PC-9 (cell line): ENCODE measurements at regions of chr15 and their contacts with region 1.

Region 1: DNA sequence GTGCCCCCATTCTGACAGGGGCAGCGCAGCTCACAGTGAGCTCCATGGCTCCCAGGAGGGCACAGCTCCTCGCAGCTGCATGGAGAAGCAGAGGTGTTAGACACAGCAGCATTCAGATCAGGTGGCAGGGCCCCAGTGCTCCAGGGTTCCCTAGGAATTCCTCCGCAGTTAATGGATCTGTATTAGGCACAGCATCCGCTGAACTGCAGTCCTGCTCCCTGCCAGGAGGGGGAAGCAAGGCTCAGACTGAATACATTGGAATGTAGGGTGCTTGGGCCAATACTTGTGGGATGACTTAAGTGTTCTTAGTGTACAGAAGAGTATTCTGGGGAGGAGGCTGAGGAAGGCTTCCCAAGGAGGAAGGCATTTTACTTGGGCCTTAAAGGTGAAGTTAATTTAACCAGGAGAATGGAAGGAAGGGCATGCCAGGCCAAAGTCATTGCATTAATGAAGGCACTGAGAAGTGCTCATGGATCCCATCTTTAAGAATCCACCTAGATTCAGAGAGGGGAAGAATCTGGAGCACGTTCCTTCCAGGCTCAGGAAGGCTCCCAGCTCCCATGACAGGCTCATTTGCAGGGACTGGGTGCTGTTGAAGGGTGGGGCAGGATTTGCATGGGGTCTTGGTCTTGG is 111.6 kb downstream of the RAB11A start:
- DNase-seq: peak; percentile 51 to 68
- H3K4me3 ChIP-seq: no peak overlapping the region
- H3K27ac ChIP-seq: no peak overlapping the region
- H3K4me1 ChIP-seq: no peaks in the 10 kb centered on the region
- H3K27me3 ChIP-seq: 0 out of 2 replicates have a peak, but pooled peaks cover 4% of the 10 kb centered on the region
- CTCF ChIP-seq: peak; percentile 78

Region 2: GRCh38 chr15:66080717-66081398 is 99.9 kb after region 1 on chr15:
- CTCF ChIA-PET with region 1: no interaction called
- POLR2A ChIA-PET with region 1: no interaction called
- intact Hi-C with region 1: loop called (anchors 10 kb)
- DNase-seq: peak in 1 of 2 experiments; percentile 33
- H3K4me3 ChIP-seq: no peak overlapping the region
- H3K27ac ChIP-seq: no peak overlapping the region
- H3K4me1 ChIP-seq: no peaks in the 10 kb centered on the region
- H3K27me3 ChIP-seq: no peaks in the 10 kb centered on the region
- CTCF ChIP-seq: no peak

Region 3: GRCh38 chr15:66196602-66197001 is 215.7 kb after region 1 on chr15:
- CTCF ChIA-PET with region 1: no interaction called
- POLR2A ChIA-PET with region 1: no interaction called
- intact Hi-C with region 1: loop called (anchors 5 kb)
- DNase-seq: peak in 1 of 2 experiments; percentile 45
- H3K4me3 ChIP-seq: no peak overlapping the region
- H3K27ac ChIP-seq: no peak overlapping the region
- H3K4me1 ChIP-seq: no peaks in the 10 kb centered on the region
- H3K27me3 ChIP-seq: no peaks in the 10 kb centered on the region
- CTCF ChIP-seq: no peak

Region 4: GRCh38 chr15:66287461-66288057 is 306.6 kb after region 1 on chr15:
- CTCF ChIA-PET with region 1: no interaction called
- POLR2A ChIA-PET with region 1: no interaction called
- intact Hi-C with region 1: loop called (anchors 5 kb)
- DNase-seq: peak in 1 of 2 experiments; percentile 42
- H3K4me3 ChIP-seq: no peak overlapping the region
- H3K27ac ChIP-seq: no peak overlapping the region
- H3K4me1 ChIP-seq: peaks cover 11% of the 10 kb centered on the region
- H3K27me3 ChIP-seq: no peaks in the 10 kb centered on the region
- CTCF ChIP-seq: peak; percentile 75